Heart left ventricle (tissue), 16 donors: ENCODE measurements at regions of chr14 and their contacts with region 1.

Region 1: DNA sequence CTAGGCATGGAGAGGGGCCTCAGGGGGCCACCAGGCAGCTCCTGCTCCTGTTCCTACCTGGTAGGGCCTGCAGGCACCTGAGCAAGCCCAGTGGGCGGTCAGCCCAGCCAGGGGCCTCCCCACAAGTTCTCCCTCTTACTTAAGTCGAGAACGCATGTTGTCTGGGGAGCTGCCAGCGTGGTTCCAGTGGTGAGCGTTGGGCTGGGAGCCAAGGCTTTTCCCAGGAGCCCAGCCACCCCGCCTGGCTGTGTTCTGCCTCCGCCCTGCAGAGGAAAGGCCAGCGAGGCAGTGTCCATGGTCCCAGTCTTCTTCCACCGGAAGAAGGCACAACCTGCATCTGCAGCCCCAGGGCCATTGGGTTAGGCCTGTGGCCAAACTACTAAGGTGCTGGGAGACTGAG is 1.4 kb downstream of the C14orf180 start:
- DNase-seq: peak; percentile 76 to 91 (median 85)
- ATAC-seq: peak; percentile 18 to 42 (median 30)
- H3K4me3 ChIP-seq: peak overlapping the region; percentile 36 to 62 (median 56)
- H3K27ac ChIP-seq: peak overlapping the region; percentile 81 to 98 (median 91)
- H3K4me1 ChIP-seq: peaks cover 0 to 73% (median 34%) of the 10 kb centered on the region in 12 donors
- H3K27me3 ChIP-seq: peaks cover 0 to 24% (median 0%) of the 10 kb centered on the region in 9 donors
- CTCF ChIP-seq: no peak
- POLR2A ChIP-seq: peak in 1 of 2 donors; percentile 19

Region 2: GRCh38 chr14:103552011-103552845 is 1028.7 kb before region 1 on chr14:
- intact Hi-C with region 1: loop called in 1 of 10 experiments (anchors 10 kb)
- DNase-seq: peak in 3 of 5 donors; percentile 49 to 80 (median 61)
- ATAC-seq: peak; percentile 27 to 57 (median 40)
- H3K4me3 ChIP-seq: peak overlapping the region in 8 of 12 donors; percentile 24 to 43 (median 30)
- H3K27ac ChIP-seq: peak overlapping the region; percentile 63 to 98 (median 91)
- H3K4me1 ChIP-seq: peaks cover 0 to 83% (median 45%) of the 10 kb centered on the region in 12 donors
- H3K27me3 ChIP-seq: no peaks in the 10 kb centered on the region
- CTCF ChIP-seq: no peak
- POLR2A ChIP-seq: no peak

Region 3: DNA sequence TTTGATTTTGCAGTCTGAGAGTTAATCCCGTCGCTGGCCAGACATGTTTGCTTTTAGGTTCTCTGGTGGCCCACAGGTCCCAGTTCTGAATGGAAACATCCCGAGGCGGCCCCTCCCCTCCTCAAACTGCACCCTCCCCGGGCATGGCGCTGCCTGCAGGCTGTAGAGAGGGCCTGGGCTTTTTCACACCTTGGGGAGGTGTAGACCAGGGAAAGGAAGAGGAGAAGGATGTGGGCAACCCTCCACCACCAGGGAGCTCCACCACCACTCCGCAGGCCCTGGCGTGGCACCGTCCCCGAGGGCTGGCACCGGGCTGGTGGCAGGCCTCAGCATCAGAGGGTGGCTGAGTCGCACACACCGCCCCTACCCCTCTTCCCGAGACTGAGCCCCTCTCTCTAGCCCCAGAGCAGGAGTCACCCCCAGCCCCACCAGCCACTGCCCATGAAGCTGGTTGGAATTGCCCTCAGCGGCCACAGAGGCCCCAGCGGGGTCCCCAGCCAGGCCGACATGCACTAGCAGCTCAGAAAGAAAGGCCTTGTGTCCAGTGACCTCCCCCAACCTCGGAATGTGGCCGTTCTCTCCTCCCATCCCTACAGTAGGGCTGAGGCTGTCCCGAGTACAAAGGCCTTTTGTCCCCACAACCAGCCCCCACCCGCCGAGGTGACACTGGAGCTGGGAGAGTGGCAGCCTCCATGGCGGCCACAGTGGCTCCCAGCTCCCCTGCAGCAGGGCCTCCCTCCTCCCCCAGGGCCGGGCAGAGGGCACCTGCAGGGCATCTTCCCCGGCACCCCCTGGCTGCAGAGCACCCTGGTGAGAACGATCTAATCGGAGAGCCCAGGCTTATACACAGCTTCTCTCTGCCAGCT is 84.9 kb after region 1 on chr14:
- intact Hi-C with region 1: no loop called
- DNase-seq: no peak
- ATAC-seq: peak; percentile 59 to 83 (median 82)
- H3K4me3 ChIP-seq: no peak overlapping the region
- H3K27ac ChIP-seq: peak overlapping the region in 1 of 12 donors; percentile 17
- H3K4me1 ChIP-seq: peaks cover 0 to 7% (median 0%) of the 10 kb centered on the region in 12 donors
- H3K27me3 ChIP-seq: peaks cover 0 to 3% (median 0%) of the 10 kb centered on the region in 9 donors
- CTCF ChIP-seq: peak in 11 of 12 donors; percentile 14 to 45 (median 31)
- POLR2A ChIP-seq: no peak

Region 4: DNA sequence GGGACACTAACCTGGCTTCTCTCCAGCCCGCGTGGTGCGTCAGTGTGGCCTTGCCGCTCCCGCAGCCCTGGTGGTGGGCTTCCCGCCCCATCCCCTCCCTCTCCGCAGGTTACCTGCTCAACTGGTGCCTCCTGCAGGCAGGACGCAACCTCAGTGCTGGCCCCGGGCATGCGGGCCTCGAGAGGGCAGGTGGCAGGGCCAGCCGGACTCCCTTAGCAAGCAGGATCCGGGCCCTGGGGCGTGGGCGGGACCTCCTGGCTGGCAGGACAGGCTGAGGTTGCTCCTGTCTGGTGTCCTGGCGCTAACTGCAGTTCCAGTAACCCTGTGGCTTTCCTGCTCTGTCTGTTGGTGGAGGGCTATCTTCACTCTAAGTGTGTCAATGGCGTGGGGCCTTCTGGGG is 134.5 kb after region 1 on chr14:
- intact Hi-C with region 1: loop called in 3 of 10 experiments (anchors 10 kb)
- DNase-seq: no peak
- ATAC-seq: no peak
- H3K4me3 ChIP-seq: no peak overlapping the region
- H3K27ac ChIP-seq: no peak overlapping the region
- H3K4me1 ChIP-seq: peaks cover 0 to 27% (median 10%) of the 10 kb centered on the region in 12 donors
- H3K27me3 ChIP-seq: no peaks in the 10 kb centered on the region
- CTCF ChIP-seq: no peak
- POLR2A ChIP-seq: no peak

Region 5: GRCh38 chr14:104723648-104724406 is 142.9 kb after region 1 on chr14 and contains the start of gene ADSS1:
- intact Hi-C with region 1: loop called in 3 of 10 experiments (anchors 10 kb)
- DNase-seq: peak; percentile 82 to 89 (median 83)
- ATAC-seq: peak in 3 of 4 donors; percentile 34 to 59 (median 57)
- H3K4me3 ChIP-seq: peak within 1 kb of the TSS; percentile 63 to 96 (median 78)
- H3K27ac ChIP-seq: peak within 1 kb of the TSS; percentile 77 to 98 (median 90)
- H3K4me1 ChIP-seq: peaks cover 3 to 80% (median 42%) of the 10 kb centered on the region in 12 donors
- H3K27me3 ChIP-seq: no peaks in the 10 kb centered on the region
- CTCF ChIP-seq: peak; percentile 82 to 97 (median 92)
- POLR2A ChIP-seq: peak in 1 of 2 donors; percentile 58
- total RNA-seq, gene ADSS1: 78.9 to 247 (median 160) TPM

Region 6: DNA sequence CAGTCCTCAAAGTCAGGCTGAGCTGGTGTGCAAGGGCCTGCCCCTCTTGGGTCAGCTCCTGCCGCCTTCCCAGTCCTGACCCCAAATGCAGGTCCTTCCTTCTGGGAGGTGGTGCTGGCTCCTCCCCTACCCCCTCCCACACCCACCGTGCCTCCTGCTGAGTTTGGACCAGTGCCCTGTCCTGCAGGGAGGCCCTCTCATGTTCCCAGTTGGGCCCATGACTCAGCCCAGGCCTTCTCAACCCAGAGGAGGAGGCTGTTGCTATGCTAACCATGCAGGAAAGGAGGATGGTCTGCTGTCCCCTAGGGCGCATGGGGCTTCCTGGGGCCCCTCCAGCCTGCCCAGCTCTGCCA is 224.3 kb after region 1 on chr14:
- intact Hi-C with region 1: no loop called
- DNase-seq: peak; percentile 63 to 83 (median 66)
- ATAC-seq: peak; percentile 65 to 76 (median 73)
- H3K4me3 ChIP-seq: no peak overlapping the region
- H3K27ac ChIP-seq: peak overlapping the region in 5 of 12 donors; percentile 10 to 53 (median 26)
- H3K4me1 ChIP-seq: peaks cover 7 to 31% (median 23%) of the 10 kb centered on the region in 12 donors
- H3K27me3 ChIP-seq: no peaks in the 10 kb centered on the region
- CTCF ChIP-seq: no peak
- POLR2A ChIP-seq: no peak